ENCODE measurements at regions of chr1 and their contacts with region 1.

Region 1: DNA sequence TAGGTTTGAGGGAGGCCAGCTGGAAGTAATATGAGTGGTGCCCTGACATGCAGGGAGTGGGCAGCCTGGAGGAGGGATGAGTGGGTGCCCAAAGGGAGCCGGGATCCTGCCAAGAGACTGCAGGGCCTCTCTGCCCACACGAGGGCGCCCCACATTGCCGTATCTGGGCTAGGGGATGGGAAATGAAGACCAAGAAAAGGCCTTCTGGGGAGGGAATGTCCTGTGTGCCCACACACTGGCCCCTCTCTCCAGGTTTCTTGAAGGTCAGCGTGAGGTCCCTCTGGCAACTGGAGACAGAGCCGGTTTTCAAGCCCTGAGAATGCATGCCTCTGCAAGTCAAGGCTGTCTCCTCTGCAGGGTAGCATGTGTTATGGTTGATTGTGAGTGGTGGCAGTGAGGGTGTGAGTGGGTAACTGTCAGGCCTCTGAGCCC is 94.1 kb upstream of the PPM1J start:
- DNase-seq: no peak
- ATAC-seq: peak; percentile 96
- H3K4me3 ChIP-seq: no peak overlapping the region
- H3K27ac ChIP-seq: no peak overlapping the region
- H3K4me1 ChIP-seq: no peaks in the 10 kb centered on the region
- H3K27me3 ChIP-seq: peaks cover 0 to 4% of the 10 kb centered on the region in 2 experiments; a peak in 1 of 4 replicates
- CTCF ChIP-seq: peak; percentile 86 to 96 (median 88)
- EP300 ChIP-seq: no peak
- POLR2A ChIP-seq: no peak
- RAD21 ChIP-seq: peak; percentile 76

Region 2: GRCh38 chr1:112798292-112798691 is 11.0 kb before region 1 on chr1:
- CTCF ChIA-PET with region 1: interaction called, 15 read pairs
- POLR2A ChIA-PET with region 1: no interaction called
- RAD21 ChIA-PET with region 1: interaction called, 5 read pairs
- SMC1A ChIA-PET with region 1: interaction called, 4 read pairs
- in situ Hi-C with region 1: no loop called
- intact Hi-C with region 1: no loop called
- DNase-seq: no peak
- ATAC-seq: no peak
- H3K4me3 ChIP-seq: no peak overlapping the region
- H3K27ac ChIP-seq: no peak overlapping the region
- H3K4me1 ChIP-seq: peaks cover 18% of the 10 kb centered on the region
- H3K27me3 ChIP-seq: no peaks in the 10 kb centered on the region
- CTCF ChIP-seq: no peak
- EP300 ChIP-seq: no peak
- POLR2A ChIP-seq: no peak
- RAD21 ChIP-seq: no peak

Region 3: DNA sequence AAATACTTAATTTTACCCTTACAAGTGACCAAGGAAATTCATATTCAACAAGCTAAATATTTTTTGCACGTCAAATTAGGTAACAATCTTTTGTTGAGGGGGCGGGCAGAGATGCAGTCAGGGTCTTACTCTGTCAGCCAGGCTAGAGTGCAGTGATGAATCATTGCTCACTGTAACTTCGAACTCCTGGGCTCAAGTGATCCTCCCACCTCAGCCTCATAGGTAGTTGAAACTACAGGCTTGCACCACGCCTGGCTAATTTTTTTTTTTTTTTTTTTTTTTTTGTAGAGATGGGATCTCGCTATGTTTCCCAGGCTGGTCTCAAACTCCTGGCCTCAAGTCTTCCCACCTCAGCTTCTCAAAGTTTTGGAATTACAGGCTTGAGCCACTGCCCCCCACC is 923.5 kb after region 1 on chr1:
- CTCF ChIA-PET with region 1: no interaction called
- POLR2A ChIA-PET with region 1: no interaction called
- RAD21 ChIA-PET with region 1: no interaction called
- SMC1A ChIA-PET with region 1: no interaction called
- in situ Hi-C with region 1: no loop called
- intact Hi-C with region 1: no loop called
- DNase-seq: no peak
- ATAC-seq: no peak
- H3K4me3 ChIP-seq: no peak overlapping the region
- H3K27ac ChIP-seq: no peak overlapping the region
- H3K4me1 ChIP-seq: no peaks in the 10 kb centered on the region
- H3K27me3 ChIP-seq: no peaks in the 10 kb centered on the region
- CTCF ChIP-seq: no peak
- EP300 ChIP-seq: no peak
- POLR2A ChIP-seq: no peak
- RAD21 ChIP-seq: no peak